Adrenal gland (tissue), 19 donors: ENCODE measurements at regions of chr22 and their contacts with region 1.

Region 1: GRCh38 chr22:23178512-23179254 is 1.6 kb upstream of the BCR start:
- DNase-seq: peak; percentile 47 to 81 (median 71)
- H3K4me3 ChIP-seq: no peak overlapping the region
- H3K27ac ChIP-seq: peak overlapping the region in 2 of 5 donors; percentile 69 to 92
- H3K4me1 ChIP-seq: peaks cover 27 to 42% of the 10 kb centered on the region in 2 donors
- H3K27me3 ChIP-seq: no peaks in the 10 kb centered on the region
- CTCF ChIP-seq: peak; percentile 92 to 98 (median 97)
- POLR2A ChIP-seq: no peak

Region 2: DNA sequence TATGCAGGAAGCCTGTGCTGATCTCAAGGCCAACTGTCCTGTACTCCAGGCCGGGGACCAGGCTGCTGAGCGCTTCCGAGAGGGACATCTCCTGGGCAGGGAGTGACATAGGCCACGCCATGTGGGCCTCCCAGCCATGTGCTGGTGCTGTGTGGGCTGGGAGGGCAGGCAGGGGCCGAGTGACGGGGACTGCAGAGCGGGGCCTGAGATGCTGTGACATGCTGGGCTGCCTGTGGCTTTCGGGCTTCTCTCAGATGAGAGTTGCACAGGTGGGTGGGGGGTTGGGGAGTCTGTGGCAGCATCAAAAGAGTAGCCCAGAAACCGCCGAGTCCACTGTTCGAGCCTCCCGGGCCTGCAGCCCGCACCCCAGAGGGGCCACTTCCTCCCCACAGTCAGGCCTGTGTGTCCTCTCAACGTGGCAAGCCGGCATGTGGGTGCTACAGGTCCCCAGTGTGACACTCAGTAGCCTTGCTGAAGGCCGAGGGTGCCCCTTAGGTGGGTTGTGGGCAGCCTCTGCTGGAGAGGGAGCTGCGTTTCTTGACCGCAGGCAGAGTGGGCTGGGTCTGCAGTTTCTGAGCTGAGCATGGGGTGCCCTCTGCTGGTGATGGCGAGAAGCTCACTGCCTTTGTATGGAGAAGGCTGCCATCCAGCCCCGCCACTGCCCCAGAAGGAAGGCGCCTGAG is 102.9 kb after region 1 on chr22:
- intact Hi-C with region 1: loop called (anchors 2 to 5 kb)
- DNase-seq: peak; percentile 72 to 94 (median 82)
- H3K4me3 ChIP-seq: no peak overlapping the region
- H3K27ac ChIP-seq: peak overlapping the region in 3 of 5 donors; percentile 41 to 80 (median 66)
- H3K4me1 ChIP-seq: peaks cover 0 to 11% of the 10 kb centered on the region in 2 donors
- H3K27me3 ChIP-seq: no peaks in the 10 kb centered on the region
- CTCF ChIP-seq: peak; percentile 87 to 98 (median 94)
- POLR2A ChIP-seq: peak in 1 of 2 donors; percentile 6